SK-N-SH (cell line): ENCODE measurements at regions of chr13 and their contacts with region 1.

Region 1: DNA sequence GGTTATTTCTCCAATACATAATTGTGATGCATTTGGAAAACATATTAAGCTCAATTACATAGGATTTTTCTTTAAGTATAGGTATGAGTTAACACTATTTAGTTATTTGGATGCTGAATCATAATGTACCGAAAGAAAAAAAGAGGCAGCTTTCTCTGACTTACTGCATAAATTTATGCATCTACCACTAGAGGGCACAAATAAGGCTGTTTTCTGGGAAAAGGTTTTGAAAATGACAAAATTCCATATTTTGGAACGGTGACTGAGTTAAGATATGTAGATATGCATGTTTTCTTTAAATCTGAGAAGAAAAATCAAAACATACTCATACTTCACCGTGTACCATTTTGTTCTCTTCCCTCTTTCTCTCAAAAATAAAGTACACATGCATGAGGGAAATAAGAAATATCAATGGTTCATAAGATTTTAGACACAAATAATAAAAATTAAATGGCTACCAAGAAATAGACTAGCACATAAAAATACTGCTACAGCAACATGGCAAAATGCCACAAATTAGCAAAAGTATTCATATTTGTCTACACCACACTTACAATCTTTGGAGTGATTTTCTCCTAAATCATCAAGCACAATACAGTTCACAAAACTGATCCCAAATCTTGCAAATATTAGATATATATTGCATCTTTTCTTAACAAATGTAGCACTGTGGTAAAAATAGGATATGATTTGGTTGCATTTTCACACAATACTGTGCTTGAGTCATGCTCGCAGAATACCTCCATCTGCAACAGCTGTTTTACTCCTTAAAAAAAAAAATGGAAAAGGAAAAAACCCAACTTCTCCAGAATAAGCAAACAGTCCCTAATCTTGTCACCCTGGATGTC is 260.0 kb downstream of the FGF14 start:
- DNase-seq: no peak
- H3K4me3 ChIP-seq: no peak overlapping the region
- H3K27ac ChIP-seq: peak overlapping the region in 1 of 2 experiments; percentile 99; a peak in 2 of 4 replicates
- H3K4me1 ChIP-seq: peaks cover 0 to 40% of the 10 kb centered on the region in 2 experiments; a peak in 3 of 4 replicates
- H3K27me3 ChIP-seq: no peaks in the 10 kb centered on the region
- CTCF ChIP-seq: peak; percentile 92
- EP300 ChIP-seq: no peak
- RAD21 ChIP-seq: peak; percentile 74

Region 2: DNA sequence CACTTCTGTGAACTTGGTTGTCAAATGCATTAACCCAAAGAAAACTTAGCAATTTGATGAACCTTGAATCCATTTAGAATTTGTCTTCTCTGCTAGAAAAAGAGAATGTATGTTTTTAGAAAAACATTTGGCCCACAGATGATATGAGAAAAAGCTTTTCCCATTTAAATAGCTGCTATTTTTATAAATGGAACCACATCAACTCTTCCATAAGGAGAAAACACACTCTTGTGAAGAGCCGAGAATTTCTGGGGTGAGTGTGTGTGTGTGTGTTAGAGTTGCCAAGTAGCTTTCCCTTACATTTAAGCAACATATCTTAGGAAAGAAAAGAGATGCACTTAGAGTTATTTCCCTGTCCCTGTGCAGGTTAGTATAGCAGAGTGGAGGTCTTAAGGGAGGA is 366.6 kb before region 1 on chr13:
- CTCF ChIA-PET with region 1: no interaction called
- POLR2A ChIA-PET with region 1: no interaction called
- DNase-seq: no peak
- H3K4me3 ChIP-seq: no peak overlapping the region
- H3K27ac ChIP-seq: no peak overlapping the region
- H3K4me1 ChIP-seq: peaks cover 0 to 8% of the 10 kb centered on the region in 2 experiments; a peak in 2 of 4 replicates
- H3K27me3 ChIP-seq: no peaks in the 10 kb centered on the region
- CTCF ChIP-seq: no peak
- EP300 ChIP-seq: no peak
- RAD21 ChIP-seq: no peak

Region 3: GRCh38 chr13:102152790-102153189 is 10.9 kb after region 1 on chr13:
- CTCF ChIA-PET with region 1: interaction called, 12 read pairs
- POLR2A ChIA-PET with region 1: no interaction called
- DNase-seq: no peak
- H3K4me3 ChIP-seq: no peak overlapping the region
- H3K27ac ChIP-seq: no peak overlapping the region
- H3K4me1 ChIP-seq: peaks cover 0 to 11% of the 10 kb centered on the region in 2 experiments; a peak in 2 of 4 replicates
- H3K27me3 ChIP-seq: no peaks in the 10 kb centered on the region
- CTCF ChIP-seq: no peak
- EP300 ChIP-seq: no peak
- RAD21 ChIP-seq: no peak